ENCODE measurements at regions of chr15 and their contacts with region 1.

Region 1: DNA sequence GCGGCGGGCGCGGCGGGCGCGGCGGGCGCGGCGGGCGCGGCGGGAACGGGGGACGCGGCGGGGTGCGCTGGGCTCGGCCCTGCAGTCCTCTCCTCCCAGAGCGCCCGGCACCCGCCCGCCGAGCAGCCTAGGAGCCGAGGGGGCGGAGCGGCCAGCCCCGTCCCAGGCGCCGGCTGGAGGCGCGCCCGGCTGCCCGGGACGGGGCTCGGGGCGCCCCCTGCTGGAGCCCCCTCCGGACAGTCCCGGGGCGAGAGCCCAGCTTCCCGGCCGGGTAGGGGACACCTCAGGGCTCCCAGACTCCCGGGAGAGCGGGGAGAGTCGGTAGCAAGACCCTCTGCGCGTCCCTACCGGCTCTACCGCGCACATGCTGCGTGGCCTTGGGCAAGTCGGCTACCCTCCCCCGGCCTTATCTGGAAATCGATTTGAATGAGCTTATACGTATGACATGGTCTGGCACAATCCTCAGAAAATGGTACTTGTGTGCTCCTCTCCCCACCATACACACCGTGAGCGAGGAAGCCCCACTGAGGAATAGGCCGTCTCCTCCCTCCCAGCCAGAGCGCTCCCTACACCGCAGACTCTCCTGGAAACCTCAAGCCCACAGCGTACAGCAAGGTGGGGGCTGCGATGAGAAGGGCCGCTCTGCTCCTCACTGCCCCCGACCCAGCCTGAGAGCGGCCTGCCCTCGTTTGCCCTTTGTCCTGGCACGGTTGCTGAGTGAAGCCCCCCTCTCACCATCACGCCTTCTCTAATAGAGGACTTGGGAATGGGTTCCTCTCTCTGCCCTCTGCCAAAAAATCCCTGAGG is at the start of gene DAPK2:
- DNase-seq: peak; percentile 88
- ATAC-seq: peak; percentile 91
- total RNA-seq, gene DAPK2: 47.9 TPM

Region 2: GRCh38 chr15:63752075-63752684 is 294.4 kb before region 1 on chr15:
- intact Hi-C with region 1: loop called (anchors 5 kb)
- DNase-seq: no peak
- ATAC-seq: peak; percentile 71

Region 3: GRCh38 chr15:63915873-63916771 is 130.4 kb before region 1 on chr15:
- intact Hi-C with region 1: loop called (anchors 5 kb)
- DNase-seq: no peak
- ATAC-seq: no peak

Region 4: GRCh38 chr15:63945007-63945788 is 101.4 kb before region 1 on chr15:
- intact Hi-C with region 1: loop called (anchors 1 kb)
- DNase-seq: peak; percentile 83
- ATAC-seq: peak; percentile 55

Region 5: GRCh38 chr15:63985221-63986184 is 61.0 kb before region 1 on chr15:
- intact Hi-C with region 1: loop called (anchors 2 kb)
- DNase-seq: peak; percentile 93
- ATAC-seq: peak; percentile 90